Activated CD4-positive, alpha-beta memory T cell treated with anti-CD3 and anti-CD28 coated beads, Interleukin-2, amount 10 ng/mL, durations not matched to agents 7 days and 5 days (primary cell): ENCODE measurements at regions of chr17 and their contacts with region 1.

Region 1: DNA sequence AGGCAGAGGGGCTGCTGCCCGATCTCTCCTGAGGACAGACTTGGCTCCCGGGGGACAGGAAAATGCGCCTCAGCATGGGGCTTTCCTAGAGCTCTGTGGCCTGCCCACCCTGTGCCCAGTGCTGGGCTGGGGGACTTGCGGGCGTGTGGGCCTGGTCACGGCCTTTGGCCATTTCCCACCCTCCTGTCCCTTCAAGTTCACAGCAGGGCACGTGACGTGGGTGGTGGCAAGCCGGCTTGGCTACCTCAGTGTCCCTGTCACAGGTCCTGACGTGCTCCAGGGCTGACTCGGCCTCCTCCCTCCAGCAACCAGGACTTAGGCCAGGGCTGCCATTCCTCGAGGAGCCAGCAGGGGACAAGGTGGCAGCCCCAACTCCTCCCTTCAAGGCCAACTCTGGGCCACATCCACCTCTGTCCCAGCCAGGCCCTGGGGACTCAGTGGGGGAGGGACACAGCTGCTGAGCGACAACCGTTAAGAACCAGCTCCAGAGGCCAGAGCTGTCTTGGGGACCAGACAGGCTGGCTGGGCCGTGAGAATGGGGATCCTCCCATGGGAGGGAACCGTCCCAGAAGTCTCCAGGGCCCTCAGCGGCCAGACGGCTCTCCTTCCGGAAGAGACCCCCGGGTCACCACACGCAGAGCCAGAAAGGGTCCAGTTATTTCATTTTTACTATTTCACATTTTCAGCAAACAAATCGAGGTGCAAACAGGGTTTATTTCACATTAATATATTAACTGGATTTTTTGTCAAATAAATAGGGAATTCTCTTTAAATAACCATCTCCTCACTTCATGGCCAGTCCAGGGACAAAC is 1.1 kb upstream of the UNC13D start:
- DNase-seq: peak; percentile 72
- H3K4me3 Mint-ChIP-seq: peak overlapping the region; percentile 56
- H3K27ac Mint-ChIP-seq: peak overlapping the region; percentile 81
- H3K4me1 Mint-ChIP-seq: peaks cover 33% of the 10 kb centered on the region
- H3K27me3 Mint-ChIP-seq: no peaks in the 10 kb centered on the region

Region 2: DNA sequence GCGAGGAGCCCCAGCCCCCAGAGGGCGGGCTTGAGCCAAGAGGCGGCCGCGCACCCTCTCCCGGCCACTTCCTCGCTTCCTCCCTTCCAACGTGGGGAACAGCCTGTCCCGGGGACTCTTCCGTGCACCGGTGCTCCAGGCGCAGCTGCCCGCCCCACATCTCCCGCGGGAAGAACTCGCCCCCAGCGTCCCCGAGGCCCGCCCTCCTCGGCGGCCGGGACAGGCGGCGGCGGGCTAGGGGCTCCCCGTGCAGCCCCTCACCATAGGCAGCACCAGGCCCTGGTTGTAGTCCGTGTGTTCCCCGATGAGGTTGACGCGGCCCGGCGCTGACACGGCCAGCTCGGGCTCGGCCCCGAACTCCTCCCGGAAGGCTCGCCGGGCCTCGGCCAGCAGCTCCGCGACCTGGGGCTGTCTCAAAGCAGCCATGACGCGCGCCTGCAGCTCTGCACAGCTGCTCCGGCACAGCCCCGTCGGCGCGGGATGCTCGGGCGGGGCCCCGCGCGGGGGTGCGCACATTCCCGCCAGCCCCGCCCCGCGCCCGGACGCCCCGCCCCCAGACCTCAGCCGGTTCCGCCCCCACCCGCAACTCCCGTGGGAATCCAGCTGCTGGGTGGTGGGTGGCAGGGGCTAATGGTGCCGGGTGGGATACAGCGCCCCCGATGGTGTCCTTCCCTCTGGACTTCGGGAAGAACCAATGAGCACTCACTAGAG is 80.4 kb before region 1 on chr17 and contains the start of gene GALK1:
- CTCF ChIA-PET with region 1: interaction called, 10 read pairs
- POLR2A ChIA-PET with region 1: interaction called, 4 read pairs
- DNase-seq: peak; percentile 82
- H3K4me3 Mint-ChIP-seq: peak within 1 kb of the TSS; percentile 77
- H3K27ac Mint-ChIP-seq: peak within 1 kb of the TSS; percentile 49
- H3K4me1 Mint-ChIP-seq: peaks cover 19% of the 10 kb centered on the region
- H3K27me3 Mint-ChIP-seq: peaks cover 4% of the 10 kb centered on the region
- total RNA-seq, gene GALK1: 40.0 to 40.6 TPM

Region 3: DNA sequence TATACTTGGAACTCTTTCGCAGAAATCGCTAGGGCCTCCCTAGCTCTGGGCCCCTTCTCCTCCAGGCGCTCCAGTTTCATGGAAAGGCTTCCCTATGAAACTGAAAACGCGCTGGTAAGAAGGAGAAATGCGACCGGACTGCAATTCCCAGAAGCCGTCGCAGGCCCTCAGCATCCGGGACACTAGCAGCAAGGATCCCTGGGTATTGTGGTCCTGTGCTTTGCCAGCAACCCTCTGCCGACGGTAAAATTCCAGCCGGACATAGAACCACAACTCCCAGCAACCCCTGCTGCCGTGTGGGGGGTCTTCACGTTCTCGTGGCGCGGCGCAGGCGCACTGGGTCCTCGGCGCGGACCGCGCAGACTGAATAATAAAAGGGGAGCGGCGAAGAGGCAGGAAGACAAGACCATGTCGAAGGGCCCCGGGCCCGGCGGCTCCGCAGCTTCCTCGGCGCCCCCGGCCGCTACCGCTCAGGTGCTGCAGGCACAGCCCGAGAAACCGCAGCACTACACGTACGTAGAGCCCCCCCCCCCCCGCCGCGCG is 60.7 kb before region 1 on chr17 and contains the start of gene UNK:
- CTCF ChIA-PET with region 1: interaction called, 8 read pairs
- POLR2A ChIA-PET with region 1: interaction called, 87 read pairs
- DNase-seq: peak; percentile 96
- H3K4me3 Mint-ChIP-seq: peak within 1 kb of the TSS; percentile 90
- H3K27ac Mint-ChIP-seq: peak within 1 kb of the TSS; percentile 100
- H3K4me1 Mint-ChIP-seq: peaks cover 52% of the 10 kb centered on the region
- H3K27me3 Mint-ChIP-seq: no peaks in the 10 kb centered on the region
- total RNA-seq, gene UNK: 26.1 TPM

Region 4: DNA sequence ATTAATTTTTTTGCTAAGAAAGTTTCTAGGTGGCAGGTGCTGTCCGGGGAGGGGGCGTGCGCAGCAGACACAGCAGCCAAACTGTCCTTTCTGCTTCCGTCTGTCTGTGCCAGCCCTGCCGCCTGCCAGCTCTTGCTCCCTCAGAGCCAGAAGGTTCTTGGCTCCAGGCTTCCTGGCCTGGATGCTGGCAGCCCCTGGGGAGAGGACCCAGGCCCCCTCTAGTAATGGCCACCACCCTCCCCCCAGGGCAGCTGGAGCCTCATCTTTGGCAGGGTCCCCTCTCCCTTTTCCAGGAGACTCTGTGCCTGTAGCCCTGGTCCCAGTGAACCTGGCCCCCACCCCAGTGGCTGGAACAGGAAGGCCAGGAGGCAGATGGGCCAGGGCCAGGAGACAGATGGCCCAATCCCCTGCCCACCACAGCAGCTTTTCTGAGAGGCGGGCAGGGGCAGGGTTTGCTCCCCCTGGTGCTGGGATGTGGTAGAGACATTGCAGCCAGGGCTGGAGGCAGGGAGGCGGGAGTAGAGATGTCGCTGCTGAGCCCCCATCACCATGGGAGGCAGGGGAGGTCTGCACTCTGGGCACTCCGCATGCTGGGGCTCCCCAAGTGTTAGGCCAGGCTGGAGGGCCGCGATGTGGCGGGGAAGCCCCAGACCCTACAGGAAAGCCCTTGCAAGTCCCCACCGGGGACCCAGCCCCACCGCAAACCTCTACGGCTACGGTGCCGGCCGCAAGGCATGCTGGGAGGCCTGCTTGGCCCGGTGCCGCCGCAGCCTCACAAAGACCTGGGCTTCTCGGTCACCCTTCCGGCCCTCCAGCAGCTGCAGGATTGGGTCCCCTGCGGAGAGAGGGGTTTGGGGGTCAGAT is 17.8 kb before region 1 on chr17:
- CTCF ChIA-PET with region 1: interaction called, 6 read pairs
- POLR2A ChIA-PET with region 1: interaction called, 49 read pairs
- DNase-seq: peak; percentile 70
- H3K4me3 Mint-ChIP-seq: peak overlapping the region; percentile 35
- H3K27ac Mint-ChIP-seq: peak overlapping the region; percentile 93
- H3K4me1 Mint-ChIP-seq: peaks cover 26% of the 10 kb centered on the region
- H3K27me3 Mint-ChIP-seq: no peaks in the 10 kb centered on the region

Region 5: GRCh38 chr17:75877752-75878173 is 32.5 kb after region 1 on chr17:
- CTCF ChIA-PET with region 1: interaction called, 7 read pairs
- POLR2A ChIA-PET with region 1: interaction called, 13 read pairs
- DNase-seq: peak; percentile 82
- H3K4me3 Mint-ChIP-seq: peak overlapping the region; percentile 89
- H3K27ac Mint-ChIP-seq: peak overlapping the region; percentile 93
- H3K4me1 Mint-ChIP-seq: peaks cover 63% of the 10 kb centered on the region
- H3K27me3 Mint-ChIP-seq: peaks cover 14% of the 10 kb centered on the region

Region 6: DNA sequence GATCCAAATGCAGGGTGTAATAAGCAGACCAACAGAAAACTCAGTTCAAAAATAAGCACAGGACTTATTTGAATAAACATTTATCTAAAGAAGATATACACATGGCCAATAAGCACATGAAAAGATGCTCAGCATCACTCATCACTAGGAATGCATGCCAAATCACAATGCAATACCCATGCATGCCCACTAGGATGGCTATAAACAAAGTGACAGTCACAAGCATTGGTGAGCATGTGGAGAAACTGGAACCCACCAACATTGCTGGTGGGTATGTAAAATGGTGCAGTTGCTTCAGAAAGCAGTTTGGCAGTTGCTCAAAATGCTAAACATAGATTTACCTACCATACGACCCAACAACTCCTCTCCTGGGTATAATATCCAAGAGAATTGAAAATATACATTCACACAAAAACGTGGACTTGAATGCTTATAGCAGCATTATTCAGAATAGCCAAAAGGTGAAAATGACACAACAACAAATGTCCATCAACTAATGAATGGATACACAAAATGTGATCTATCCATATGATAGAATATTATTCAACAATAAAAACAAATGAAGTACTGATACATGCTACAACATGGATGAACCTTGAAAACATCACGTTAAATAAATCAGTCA is 587.6 kb after region 1 on chr17:
- CTCF ChIA-PET with region 1: no interaction called
- POLR2A ChIA-PET with region 1: no interaction called
- DNase-seq: no peak
- H3K4me3 Mint-ChIP-seq: no peak overlapping the region
- H3K27ac Mint-ChIP-seq: no peak overlapping the region
- H3K4me1 Mint-ChIP-seq: peaks cover 3% of the 10 kb centered on the region
- H3K27me3 Mint-ChIP-seq: no peaks in the 10 kb centered on the region